ENCODE measurements at regions of chr11 and their contacts with region 1.

Region 1: GRCh38 chr11:119067371-119068222 is at the start of gene VPS11:
- DNase-seq: peak; percentile 97 to 98 (median 97)
- H3K4me3 ChIP-seq: peak within 1 kb of the TSS; percentile 87 to 99
- H3K4me3 Mint-ChIP-seq: peak within 1 kb of the TSS; percentile 91 to 99 (median 94)
- H3K27ac ChIP-seq: peak within 1 kb of the TSS; percentile 88
- H3K27ac Mint-ChIP-seq: peak within 1 kb of the TSS; percentile 92 to 100 (median 98)
- H3K4me1 ChIP-seq: peaks cover 34% of the 10 kb centered on the region
- H3K4me1 Mint-ChIP-seq: peaks cover 23 to 43% (median 36%) of the 10 kb centered on the region in 4 donors
- H3K27me3 ChIP-seq: no peaks in the 10 kb centered on the region
- H3K27me3 Mint-ChIP-seq: no peaks in the 10 kb centered on the region
- total RNA-seq, gene VPS11: 56.2 to 61.2 TPM

Region 2: DNA sequence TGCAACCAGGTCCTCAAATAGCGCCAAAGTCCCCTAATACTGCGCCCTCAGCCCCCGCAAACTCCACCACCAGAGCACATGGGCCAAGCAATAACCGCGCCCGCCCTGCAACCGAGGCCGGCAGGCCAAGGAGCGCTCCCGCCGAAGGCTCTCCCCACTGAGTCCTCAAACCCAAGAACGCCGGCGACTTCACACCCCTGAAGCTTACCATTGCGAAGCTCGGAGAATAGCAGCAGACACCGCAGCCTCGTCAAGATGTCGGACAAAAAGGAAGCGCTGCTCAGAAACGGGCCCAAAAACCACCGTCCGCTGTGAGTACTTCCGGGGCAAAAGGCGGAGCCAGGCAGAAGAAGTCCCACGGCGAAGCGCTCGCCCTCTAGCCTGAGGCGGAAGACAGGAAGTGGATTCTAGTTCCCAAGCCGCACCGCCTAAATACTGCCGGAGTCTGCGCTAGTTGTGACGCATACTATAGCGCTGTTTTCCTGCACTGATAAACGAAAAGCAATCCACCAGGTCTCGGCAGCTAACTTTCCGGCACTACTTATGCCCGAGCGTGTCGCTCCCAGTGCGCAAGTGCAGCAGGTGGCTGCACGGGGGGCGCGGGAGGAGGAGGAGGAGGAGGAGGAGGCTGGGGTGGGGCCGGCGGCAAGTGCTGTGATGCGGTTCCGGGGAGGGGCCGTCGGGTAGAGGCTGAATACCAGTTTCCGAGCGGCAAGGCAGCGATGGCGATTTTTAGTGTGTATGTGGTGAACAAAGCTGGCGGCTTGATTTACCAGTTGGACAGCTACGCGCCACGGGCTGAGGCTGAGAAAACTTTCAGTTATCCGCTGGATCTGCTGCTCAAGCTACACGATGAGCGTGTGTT is 49.3 kb before region 1 on chr11 and contains the starts of genes RPS25 and TRAPPC4:
- CTCF ChIA-PET with region 1: interaction called, 7 read pairs
- POLR2A ChIA-PET with region 1: interaction called, 37 read pairs
- intact Hi-C with region 1: loop called (anchors 1 kb)
- DNase-seq: peak; percentile 96 to 98 (median 97)
- H3K4me3 ChIP-seq: peak within 1 kb of the TSS; percentile 71 to 96
- H3K4me3 Mint-ChIP-seq: peak within 1 kb of the TSS; percentile 94 to 100 (median 99)
- H3K27ac ChIP-seq: peak within 1 kb of the TSS; percentile 87
- H3K27ac Mint-ChIP-seq: peak within 1 kb of the TSS; percentile 98 to 100 (median 100)
- H3K4me1 ChIP-seq: peaks cover 52% of the 10 kb centered on the region
- H3K4me1 Mint-ChIP-seq: peaks cover 21 to 73% (median 51%) of the 10 kb centered on the region in 4 donors
- H3K27me3 ChIP-seq: no peaks in the 10 kb centered on the region
- H3K27me3 Mint-ChIP-seq: no peaks in the 10 kb centered on the region
- total RNA-seq, gene RPS25: 2,545 to 2,705 TPM
- total RNA-seq, gene TRAPPC4: 89.2 to 97.3 TPM

Region 3: GRCh38 chr11:119057000-119057769 is 10.4 kb before region 1 on chr11 and contains the start of gene HYOU1:
- CTCF ChIA-PET with region 1: interaction called, 17 read pairs
- POLR2A ChIA-PET with region 1: interaction called, 67 read pairs
- intact Hi-C with region 1: loop called (anchors 1 kb)
- DNase-seq: peak; percentile 98
- H3K4me3 ChIP-seq: peak within 1 kb of the TSS; percentile 82 to 87
- H3K4me3 Mint-ChIP-seq: peak within 1 kb of the TSS; percentile 92 to 98 (median 97)
- H3K27ac ChIP-seq: peak within 1 kb of the TSS; percentile 91
- H3K27ac Mint-ChIP-seq: peak within 1 kb of the TSS; percentile 91 to 98 (median 97)
- H3K4me1 ChIP-seq: peaks cover 25% of the 10 kb centered on the region
- H3K4me1 Mint-ChIP-seq: peaks cover 20 to 52% (median 39%) of the 10 kb centered on the region in 4 donors
- H3K27me3 ChIP-seq: no peaks in the 10 kb centered on the region
- H3K27me3 Mint-ChIP-seq: no peaks in the 10 kb centered on the region
- total RNA-seq, gene HYOU1: 136 to 146 TPM

Region 4: GRCh38 chr11:119101759-119102423 is 34.3 kb after region 1 on chr11 and contains the start of gene DPAGT1:
- CTCF ChIA-PET with region 1: interaction called, 9 read pairs
- POLR2A ChIA-PET with region 1: interaction called, 37 read pairs
- intact Hi-C with region 1: loop called (anchors 1 kb)
- DNase-seq: peak; percentile 86 to 89 (median 88)
- H3K4me3 ChIP-seq: peak within 1 kb of the TSS; percentile 87 to 98
- H3K4me3 Mint-ChIP-seq: peak within 1 kb of the TSS; percentile 93 to 99 (median 97)
- H3K27ac ChIP-seq: peak within 1 kb of the TSS; percentile 91
- H3K27ac Mint-ChIP-seq: peak within 1 kb of the TSS; percentile 93 to 100 (median 99)
- H3K4me1 ChIP-seq: peaks cover 41% of the 10 kb centered on the region
- H3K4me1 Mint-ChIP-seq: peaks cover 27 to 60% (median 43%) of the 10 kb centered on the region in 4 donors
- H3K27me3 ChIP-seq: no peaks in the 10 kb centered on the region
- H3K27me3 Mint-ChIP-seq: no peaks in the 10 kb centered on the region
- total RNA-seq, gene DPAGT1: 52.0 to 52.3 TPM

Region 5: GRCh38 chr11:119168471-119169281 is 101.1 kb after region 1 on chr11 and contains the start of gene NLRX1:
- CTCF ChIA-PET with region 1: interaction called, 4 read pairs
- POLR2A ChIA-PET with region 1: interaction called, 13 read pairs
- intact Hi-C with region 1: no loop called
- DNase-seq: peak; percentile 81 to 83 (median 82)
- H3K4me3 ChIP-seq: peak within 1 kb of the TSS; percentile 78 to 79
- H3K4me3 Mint-ChIP-seq: peak within 1 kb of the TSS; percentile 89 to 91 (median 90)
- H3K27ac ChIP-seq: peak within 1 kb of the TSS; percentile 67
- H3K27ac Mint-ChIP-seq: peak within 1 kb of the TSS; percentile 68 to 90 (median 89)
- H3K4me1 ChIP-seq: peaks cover 6% of the 10 kb centered on the region
- H3K4me1 Mint-ChIP-seq: peaks cover 1 to 10% (median 8%) of the 10 kb centered on the region in 4 donors
- H3K27me3 ChIP-seq: no peaks in the 10 kb centered on the region
- H3K27me3 Mint-ChIP-seq: no peaks in the 10 kb centered on the region
- total RNA-seq, gene NLRX1: 8.8 to 9.2 TPM

Region 6: GRCh38 chr11:119205574-119206510 is 138.2 kb after region 1 on chr11 and contains the start of gene CBL:
- CTCF ChIA-PET with region 1: interaction called, 9 read pairs
- POLR2A ChIA-PET with region 1: interaction called, 11 read pairs
- intact Hi-C with region 1: no loop called
- DNase-seq: peak; percentile 91 to 95 (median 92)
- H3K4me3 ChIP-seq: peak within 1 kb of the TSS; percentile 64 to 94
- H3K4me3 Mint-ChIP-seq: peak within 1 kb of the TSS; percentile 91 to 100 (median 96)
- H3K27ac ChIP-seq: peak within 1 kb of the TSS; percentile 77
- H3K27ac Mint-ChIP-seq: peak within 1 kb of the TSS; percentile 80 to 96 (median 94)
- H3K4me1 ChIP-seq: peaks cover 35% of the 10 kb centered on the region
- H3K4me1 Mint-ChIP-seq: peaks cover 15 to 54% (median 28%) of the 10 kb centered on the region in 4 donors
- H3K27me3 ChIP-seq: no peaks in the 10 kb centered on the region
- H3K27me3 Mint-ChIP-seq: no peaks in the 10 kb centered on the region
- total RNA-seq, gene CBL: 39.5 to 39.8 TPM

Region 7: GRCh38 chr11:119323538-119324033 is 256.0 kb after region 1 on chr11:
- CTCF ChIA-PET with region 1: interaction called, 7 read pairs
- POLR2A ChIA-PET with region 1: interaction called, 4 read pairs
- intact Hi-C with region 1: loop called (anchors 1 kb)
- DNase-seq: peak; percentile 69 to 80 (median 74)
- H3K4me3 ChIP-seq: no peak overlapping the region
- H3K4me3 Mint-ChIP-seq: peak overlapping the region in 4 of 8 donors; percentile 15 to 68 (median 40)
- H3K27ac ChIP-seq: no peak overlapping the region
- H3K27ac Mint-ChIP-seq: peak overlapping the region in 3 of 7 donors; percentile 38 to 82 (median 47)
- H3K4me1 ChIP-seq: peaks cover 40% of the 10 kb centered on the region
- H3K4me1 Mint-ChIP-seq: peaks cover 15 to 34% (median 24%) of the 10 kb centered on the region in 4 donors
- H3K27me3 ChIP-seq: no peaks in the 10 kb centered on the region
- H3K27me3 Mint-ChIP-seq: peaks cover 0 to 5% of the 10 kb centered on the region in 2 donors